Spleen (tissue), 13 donors: ENCODE measurements at regions of chr6 and their contacts with region 1.

Region 1: GRCh38 chr6:149834513-149835481 is 29.4 kb downstream of the LRP11 start:
- DNase-seq: no peak
- H3K4me3 ChIP-seq: no peak overlapping the region
- H3K27ac ChIP-seq: no peak overlapping the region
- H3K4me1 ChIP-seq: no peaks in the 10 kb centered on the region
- H3K27me3 ChIP-seq: no peaks in the 10 kb centered on the region
- CTCF ChIP-seq: peak; percentile 67 to 94 (median 89)
- POLR2A ChIP-seq: no peak

Region 2: GRCh38 chr6:149683256-149683859 is 151.4 kb before region 1 on chr6:
- intact Hi-C with region 1: no loop called
- DNase-seq: no peak
- H3K4me3 ChIP-seq: no peak overlapping the region
- H3K27ac ChIP-seq: no peak overlapping the region
- H3K4me1 ChIP-seq: no peaks in the 10 kb centered on the region
- H3K27me3 ChIP-seq: no peaks in the 10 kb centered on the region
- CTCF ChIP-seq: no peak
- POLR2A ChIP-seq: peak in 1 of 3 donors; percentile 0

Region 3: GRCh38 chr6:149925974-149926777 is 91.4 kb after region 1 on chr6:
- intact Hi-C with region 1: loop called (anchors 2 kb)
- DNase-seq: peak; percentile 90
- H3K4me3 ChIP-seq: peak overlapping the region; percentile 17 to 64 (median 34)
- H3K27ac ChIP-seq: peak overlapping the region in 3 of 8 donors; percentile 4 to 40 (median 15)
- H3K4me1 ChIP-seq: peaks cover 0 to 35% (median 29%) of the 10 kb centered on the region in 6 donors
- H3K27me3 ChIP-seq: peaks cover 0 to 98% (median 39%) of the 10 kb centered on the region in 7 donors
- CTCF ChIP-seq: peak; percentile 53 to 96 (median 77)
- POLR2A ChIP-seq: no peak

Region 4: DNA sequence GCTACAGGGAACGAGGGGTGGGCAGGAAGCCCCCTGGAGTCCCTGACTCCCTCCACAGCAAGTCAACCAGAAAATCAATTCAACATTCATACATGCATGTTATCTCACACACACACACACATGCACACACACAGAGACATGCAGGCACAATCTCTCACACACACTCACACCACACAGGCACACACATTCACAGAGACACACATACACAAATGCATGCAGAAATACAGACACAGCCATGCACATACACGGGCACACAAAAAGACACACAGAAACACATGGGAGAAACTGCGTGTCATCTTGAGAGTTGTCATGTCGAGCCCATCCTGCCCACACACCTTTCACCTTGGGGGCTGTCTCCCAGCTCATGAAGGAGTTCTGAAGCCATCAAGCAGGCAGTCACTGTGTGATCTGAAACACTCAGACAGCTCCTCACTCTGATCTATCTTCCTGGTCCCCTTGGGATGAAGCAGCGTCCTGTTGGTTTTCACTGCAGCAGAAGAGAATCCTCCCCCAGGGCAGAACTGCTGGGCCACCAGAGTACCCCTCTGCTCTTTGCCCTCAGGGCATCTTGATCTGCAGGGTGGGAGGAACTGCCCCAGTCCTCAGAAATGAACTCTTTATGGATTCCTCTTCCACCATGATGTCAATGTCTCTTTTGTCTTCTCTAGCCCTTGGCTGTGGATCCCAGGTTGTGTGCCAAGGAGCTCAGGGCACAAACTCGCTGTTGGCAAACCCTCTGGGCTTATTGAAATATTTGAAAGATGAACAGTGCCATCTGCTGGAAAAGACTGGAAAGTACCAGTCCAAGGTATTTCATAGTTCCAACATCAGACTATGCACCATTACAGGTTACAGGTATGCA is 181.8 kb after region 1 on chr6:
- intact Hi-C with region 1: loop called (anchors 5 kb)
- DNase-seq: peak; percentile 71
- H3K4me3 ChIP-seq: no peak overlapping the region
- H3K27ac ChIP-seq: no peak overlapping the region
- H3K4me1 ChIP-seq: peaks cover 0 to 14% (median 7%) of the 10 kb centered on the region in 6 donors
- H3K27me3 ChIP-seq: peaks cover 3 to 76% (median 51%) of the 10 kb centered on the region in 7 donors
- CTCF ChIP-seq: peak; percentile 66 to 90 (median 80)
- POLR2A ChIP-seq: no peak